Head of caudate nucleus (tissue), 42 donors: ENCODE measurements at regions of chr14 and their contacts with region 1.

Region 1: DNA sequence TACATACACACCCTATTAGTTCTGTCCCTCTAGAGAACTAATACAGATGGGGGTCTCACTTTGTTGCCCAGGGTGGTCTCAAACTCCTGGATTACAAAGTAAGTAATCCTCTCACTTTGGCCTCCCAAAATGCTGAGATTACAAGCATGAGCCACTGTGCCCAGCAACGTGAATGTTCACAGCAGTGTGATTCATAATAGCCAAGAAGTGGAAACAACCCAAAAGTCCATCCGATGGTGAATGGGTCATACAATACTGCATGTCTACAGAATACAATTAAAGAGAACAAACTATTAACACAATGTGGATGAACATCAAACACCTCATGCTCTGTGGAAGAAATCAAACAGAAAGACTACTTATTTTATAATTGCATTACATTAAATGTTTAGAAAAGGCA is 57.3 kb upstream of the SYNE2 start:
- DNase-seq: no peak

Region 2: DNA sequence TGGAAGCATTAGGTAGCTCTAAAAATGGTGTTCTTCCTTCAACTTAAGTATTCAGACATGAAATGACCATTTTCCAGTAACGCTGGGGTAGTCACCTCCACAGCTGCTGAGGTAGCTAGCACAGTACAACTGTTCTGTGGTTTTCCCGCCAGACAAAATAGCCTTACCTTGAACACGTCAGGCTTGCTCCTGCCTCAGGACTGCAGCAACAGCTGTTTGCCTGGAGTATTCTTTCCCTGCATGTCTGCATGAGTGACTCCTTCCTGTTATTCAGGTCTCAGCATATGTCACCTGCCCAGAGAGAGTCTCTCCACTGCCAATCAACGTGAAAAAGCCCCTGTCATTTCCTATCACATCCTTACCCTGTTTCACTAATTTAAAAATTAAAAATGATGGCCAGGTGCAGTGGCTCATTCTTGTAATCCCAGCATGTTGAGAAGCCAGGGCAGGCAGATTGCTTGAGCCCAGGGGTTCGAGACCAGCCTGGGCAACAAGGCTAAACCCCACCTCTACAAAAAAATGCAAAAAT is 191.7 kb before region 1 on chr14:
- intact Hi-C with region 1: no loop called
- DNase-seq: no peak

Region 3: DNA sequence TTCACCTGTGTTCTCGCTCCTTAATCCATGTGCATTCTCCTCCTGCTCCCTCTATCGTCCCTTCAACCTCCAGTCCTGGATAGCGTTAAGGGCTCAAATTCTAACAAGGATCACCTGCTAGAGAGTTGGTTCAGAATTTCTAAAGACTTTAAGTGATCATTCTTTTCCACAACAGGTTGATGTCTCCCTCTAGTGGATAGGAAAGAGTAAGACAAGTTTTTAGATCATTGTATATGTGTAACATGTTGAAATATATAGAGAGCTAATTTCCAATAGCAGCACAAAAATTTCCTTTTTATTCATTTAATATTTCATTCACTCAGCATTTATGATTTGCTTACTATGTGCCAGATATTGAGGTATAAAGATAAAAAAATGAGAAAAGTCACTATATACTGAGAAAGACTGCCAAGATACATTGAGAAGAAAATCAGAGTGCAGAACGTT is 508.0 kb after region 1 on chr14:
- intact Hi-C with region 1: loop called (anchors 5 kb)
- DNase-seq: no peak